Posterior vena cava (tissue), 2 donors: ENCODE measurements at regions of chr2 and their contacts with region 1.

Region 1: GRCh38 chr2:235468978-235469655 is 24.7 kb upstream of the AGAP1 start:
- DNase-seq: no peak

Region 2: DNA sequence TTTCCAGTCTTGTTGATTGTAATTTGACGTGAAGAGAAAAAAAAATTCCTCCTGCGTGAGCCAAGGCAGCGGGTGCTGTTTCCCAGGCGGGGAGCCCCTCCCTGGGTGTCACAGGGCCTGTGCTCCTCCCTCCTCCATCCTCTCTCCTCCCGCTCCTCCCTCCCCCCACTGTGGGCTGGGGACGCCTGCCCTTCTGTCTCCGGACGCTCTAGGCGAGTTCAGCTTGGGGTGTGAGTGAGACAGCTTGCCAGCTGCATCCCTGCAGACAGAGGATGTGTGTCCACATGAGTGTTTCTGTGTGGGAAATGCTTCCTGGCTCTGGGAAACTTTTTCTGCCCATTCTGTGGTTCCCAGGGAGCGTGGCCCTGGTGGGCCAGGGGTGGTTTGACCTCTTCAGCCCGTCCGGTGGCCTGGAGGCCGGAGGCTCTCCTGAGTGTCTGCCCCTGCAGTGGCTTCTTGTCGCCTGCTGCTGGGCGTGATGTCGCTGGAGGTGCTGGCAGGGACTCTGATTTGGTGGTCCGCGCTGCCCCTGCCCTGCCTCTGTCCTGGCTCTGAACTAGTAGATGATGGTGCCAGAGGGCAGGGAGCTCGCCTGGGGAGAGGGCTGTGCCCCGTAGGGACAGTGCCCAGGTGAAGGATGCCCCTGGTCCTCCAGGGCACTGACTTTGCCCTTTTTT is 1999.0 kb before region 1 on chr2:
- intact Hi-C with region 1: loop called in 1 of 2 experiments (anchors 10 kb)
- DNase-seq: peak; percentile 88

Region 3: DNA sequence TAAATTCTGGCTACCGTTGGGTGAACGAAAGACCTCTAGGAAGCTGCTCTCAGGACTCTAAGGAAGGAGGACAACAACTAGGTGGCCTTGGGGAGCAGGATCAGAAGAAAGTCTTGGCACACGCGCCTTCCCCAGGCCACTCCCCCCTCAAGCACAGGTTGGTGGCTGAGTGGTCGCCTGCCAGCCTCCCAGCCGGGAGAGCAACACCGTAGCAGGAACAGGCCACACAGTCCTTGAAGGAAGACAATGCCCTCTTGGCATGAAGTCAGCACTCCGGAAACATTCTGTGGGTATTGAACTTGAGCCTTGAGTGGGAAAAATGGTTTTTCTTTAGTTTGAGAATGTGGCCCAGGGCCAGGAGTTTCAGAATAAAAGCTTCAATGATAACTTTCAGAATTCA is 62.7 kb before region 1 on chr2:
- intact Hi-C with region 1: no loop called
- DNase-seq: no peak

Region 4: GRCh38 chr2:235534678-235535422 is 65.7 kb after region 1 on chr2:
- intact Hi-C with region 1: no loop called
- DNase-seq: peak; percentile 68